ENCODE measurements at regions of chr6 and their contacts with region 1.

Region 1: GRCh38 chr6:73520688-73521350 is at the start of gene EEF1A1:
- DNase-seq: peak; percentile 100
- ATAC-seq: peak; percentile 86
- H3K4me3 ChIP-seq: peak within 1 kb of the TSS; percentile 86 to 91
- H3K27ac ChIP-seq: peak within 1 kb of the TSS; percentile 100
- H3K4me1 ChIP-seq: peaks cover 39% of the 10 kb centered on the region
- H3K27me3 ChIP-seq: no peaks in the 10 kb centered on the region
- CTCF ChIP-seq: no peak
- total RNA-seq, gene EEF1A1: 10,069 TPM

Region 2: DNA sequence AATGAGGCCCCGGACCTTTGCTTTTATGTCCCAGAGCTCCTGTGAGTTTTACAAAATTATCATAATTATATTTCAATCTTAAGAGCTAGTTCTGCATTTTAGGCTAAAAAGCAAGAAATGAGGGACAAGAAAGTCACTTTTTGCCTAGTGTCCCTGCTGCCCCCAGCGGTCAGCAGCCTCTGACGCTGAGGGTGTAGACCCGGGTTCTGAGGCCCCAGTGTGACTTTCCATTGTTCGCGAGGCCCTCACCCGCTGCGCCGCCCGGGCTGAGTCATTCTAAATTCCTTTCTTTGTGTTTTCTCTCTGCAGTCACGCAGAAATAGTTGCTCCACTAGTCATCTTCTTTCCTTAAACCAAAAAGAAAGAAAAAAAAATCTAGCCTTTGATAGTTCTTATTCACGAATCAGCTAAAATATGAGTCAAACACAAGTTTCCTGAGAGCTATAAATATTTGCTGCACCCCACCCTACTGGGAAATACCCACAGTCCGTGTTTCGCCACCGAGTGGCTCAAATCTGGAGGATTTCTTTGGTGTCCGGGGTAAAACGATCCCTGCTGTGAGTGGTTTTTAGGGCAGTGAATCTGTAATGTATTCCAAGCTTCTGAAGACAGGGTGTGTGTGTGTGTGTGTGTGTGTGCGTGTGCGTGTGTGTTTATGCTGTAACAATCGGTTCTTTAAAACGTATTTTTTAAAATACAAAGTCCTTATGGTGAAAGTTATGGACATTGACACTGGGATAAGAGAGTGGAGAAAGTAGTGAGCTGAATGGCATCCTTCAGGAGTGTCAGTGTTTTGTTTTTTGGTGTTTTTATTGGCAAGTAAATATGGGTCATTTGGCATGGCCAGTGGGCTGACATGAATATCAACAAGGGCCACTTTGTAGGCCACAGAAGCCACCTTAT is 59.7 kb after region 1 on chr6:
- CTCF ChIA-PET with region 1: interaction called, 5 read pairs
- POLR2A ChIA-PET with region 1: interaction called, 31 read pairs
- in situ Hi-C with region 1: no loop called
- intact Hi-C with region 1: loop called (anchors 2 kb)
- DNase-seq: peak; percentile 98
- ATAC-seq: peak; percentile 93
- H3K4me3 ChIP-seq: peak overlapping the region; percentile 26 to 55
- H3K27ac ChIP-seq: peak overlapping the region; percentile 100
- H3K4me1 ChIP-seq: peaks cover 49% of the 10 kb centered on the region
- H3K27me3 ChIP-seq: no peaks in the 10 kb centered on the region
- CTCF ChIP-seq: peak; percentile 90

Region 3: GRCh38 chr6:73585566-73586415 is 65.0 kb after region 1 on chr6:
- CTCF ChIA-PET with region 1: interaction called, 4 read pairs
- POLR2A ChIA-PET with region 1: interaction called, 31 read pairs
- in situ Hi-C with region 1: no loop called
- intact Hi-C with region 1: loop called (anchors 2 kb)
- DNase-seq: peak; percentile 68
- ATAC-seq: peak; percentile 88
- H3K4me3 ChIP-seq: peak overlapping the region; percentile 18 to 19
- H3K27ac ChIP-seq: peak overlapping the region; percentile 100
- H3K4me1 ChIP-seq: peaks cover 36% of the 10 kb centered on the region
- H3K27me3 ChIP-seq: no peaks in the 10 kb centered on the region
- CTCF ChIP-seq: no peak

Region 4: DNA sequence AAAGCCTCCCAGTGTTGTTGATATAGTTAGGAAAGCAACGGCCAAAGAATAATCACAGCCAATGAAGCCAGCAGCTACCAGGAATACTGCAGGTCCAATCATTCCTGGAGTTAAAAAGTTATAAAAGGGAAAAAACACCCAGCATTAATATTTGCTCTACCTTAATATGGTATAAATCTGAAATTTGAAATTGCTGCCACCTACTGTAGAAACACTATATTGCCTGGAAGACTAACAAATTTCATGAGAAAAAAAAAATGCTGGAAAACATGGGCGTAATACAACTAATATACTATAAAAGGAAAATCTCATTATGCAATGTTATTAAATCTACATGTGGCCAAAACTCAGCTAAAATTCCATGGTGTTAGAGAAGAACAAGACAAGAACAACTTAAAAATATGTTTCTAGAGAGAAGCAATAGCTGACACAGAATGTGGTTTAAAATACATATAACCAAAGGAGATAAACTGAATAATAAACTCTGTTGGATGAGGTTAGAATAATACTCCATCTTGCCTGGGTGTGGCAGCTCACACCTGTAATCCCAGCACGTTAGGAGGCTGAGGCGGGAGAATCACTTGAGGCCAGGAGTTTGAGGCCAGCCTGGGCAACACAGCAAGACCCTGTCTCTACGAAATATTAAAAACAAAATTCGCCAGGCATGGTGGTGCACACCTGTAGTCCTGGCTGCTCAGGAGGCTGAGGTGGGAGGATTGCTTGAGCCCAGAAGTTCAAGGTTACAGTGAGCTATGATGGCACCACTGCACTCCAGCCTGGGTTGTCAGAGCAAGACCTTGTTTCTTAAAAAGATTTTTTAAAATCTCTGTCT is 89.8 kb after region 1 on chr6:
- CTCF ChIA-PET with region 1: interaction called, 5 read pairs
- POLR2A ChIA-PET with region 1: interaction called, 20 read pairs
- in situ Hi-C with region 1: no loop called
- intact Hi-C with region 1: loop called (anchors 1 kb)
- DNase-seq: peak; percentile 63
- ATAC-seq: peak; percentile 77
- H3K4me3 ChIP-seq: no peak overlapping the region; a peak in 1 of 4 replicates
- H3K27ac ChIP-seq: peak overlapping the region; percentile 72
- H3K4me1 ChIP-seq: peaks cover 19% of the 10 kb centered on the region
- H3K27me3 ChIP-seq: no peaks in the 10 kb centered on the region
- CTCF ChIP-seq: peak; percentile 80; the same call in 1 of the 2 replicates